PC-9 (cell line): ENCODE measurements at regions of chr19 and their contacts with region 1.

Region 1: GRCh38 chr19:54684527-54684926 is 21.7 kb downstream of the LILRB4 start:
- DNase-seq: peak; percentile 6 to 34
- H3K4me3 ChIP-seq: no peak overlapping the region
- H3K27ac ChIP-seq: no peak overlapping the region
- H3K4me1 ChIP-seq: no peaks in the 10 kb centered on the region
- H3K27me3 ChIP-seq: peaks cover 51% of the 10 kb centered on the region
- CTCF ChIP-seq: no peak

Region 2: DNA sequence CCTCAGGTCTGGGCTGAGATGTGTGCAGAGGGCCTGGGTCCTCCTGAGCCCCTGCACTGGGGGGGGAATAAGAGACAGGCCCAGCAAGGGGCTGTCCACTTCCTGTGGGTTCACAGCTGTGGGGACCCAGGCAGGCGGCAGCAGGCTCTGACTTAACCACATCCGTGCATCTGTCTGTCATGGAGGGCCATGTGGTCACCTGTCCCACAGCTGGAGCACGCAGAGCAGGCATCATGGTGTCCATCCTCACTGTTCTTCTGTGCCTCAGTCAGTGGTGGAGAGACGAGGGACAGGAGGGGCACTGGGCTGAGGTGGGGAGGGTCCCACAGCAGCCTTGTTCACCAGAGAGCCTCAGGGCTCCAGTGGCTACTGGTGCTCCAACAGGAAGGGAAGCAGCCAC is 23.4 kb after region 1 on chr19:
- CTCF ChIA-PET with region 1: no interaction called
- POLR2A ChIA-PET with region 1: no interaction called
- intact Hi-C with region 1: no loop called
- DNase-seq: no peak
- H3K4me3 ChIP-seq: no peak overlapping the region
- H3K27ac ChIP-seq: no peak overlapping the region
- H3K4me1 ChIP-seq: no peaks in the 10 kb centered on the region
- H3K27me3 ChIP-seq: peaks cover 49% of the 10 kb centered on the region
- CTCF ChIP-seq: no peak

Region 3: DNA sequence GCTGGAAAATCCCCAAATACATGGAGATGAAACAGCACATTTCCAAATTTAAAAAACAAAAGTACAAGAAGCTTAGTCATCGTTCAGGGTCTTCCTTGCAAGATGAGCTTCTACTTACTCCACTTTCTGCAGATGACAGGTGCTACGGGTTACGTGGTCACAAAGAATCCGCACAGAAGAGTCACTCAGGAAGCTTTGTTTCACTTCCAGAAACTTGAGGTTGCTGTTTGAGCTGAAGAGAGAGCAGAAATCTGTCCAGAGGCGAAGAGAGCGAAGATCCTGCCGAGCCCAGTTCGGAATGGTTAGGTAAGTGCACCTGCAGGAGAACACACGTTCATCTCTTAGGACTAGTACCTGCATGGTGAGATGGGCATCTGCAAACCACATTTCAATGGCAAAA is 253.4 kb after region 1 on chr19:
- CTCF ChIA-PET with region 1: interaction called, 15 read pairs
- POLR2A ChIA-PET with region 1: no interaction called
- intact Hi-C with region 1: no loop called
- DNase-seq: no peak
- H3K4me3 ChIP-seq: no peak overlapping the region
- H3K27ac ChIP-seq: no peak overlapping the region
- H3K4me1 ChIP-seq: no peaks in the 10 kb centered on the region
- H3K27me3 ChIP-seq: peaks cover 29% of the 10 kb centered on the region; the same call in 1 of the 2 replicates
- CTCF ChIP-seq: no peak